ENCODE measurements at regions of chrX and their contacts with region 1.

Region 1: GRCh38 chrX:138745196-138745595 is 33.7 kb upstream of the FGF13 start:
- DNase-seq: peak; percentile 8
- ATAC-seq: peak; percentile 82
- H3K4me3 ChIP-seq: no peak overlapping the region
- H3K27ac ChIP-seq: no peak overlapping the region
- H3K4me1 ChIP-seq: no peaks in the 10 kb centered on the region
- H3K27me3 ChIP-seq: no peaks in the 10 kb centered on the region
- CTCF ChIP-seq: peak; percentile 66 to 71 (median 71); a peak in 5 of 6 replicates
- EP300 ChIP-seq: no peak
- POLR2A ChIP-seq: no peak
- RAD21 ChIP-seq: peak; percentile 75

Region 2: DNA sequence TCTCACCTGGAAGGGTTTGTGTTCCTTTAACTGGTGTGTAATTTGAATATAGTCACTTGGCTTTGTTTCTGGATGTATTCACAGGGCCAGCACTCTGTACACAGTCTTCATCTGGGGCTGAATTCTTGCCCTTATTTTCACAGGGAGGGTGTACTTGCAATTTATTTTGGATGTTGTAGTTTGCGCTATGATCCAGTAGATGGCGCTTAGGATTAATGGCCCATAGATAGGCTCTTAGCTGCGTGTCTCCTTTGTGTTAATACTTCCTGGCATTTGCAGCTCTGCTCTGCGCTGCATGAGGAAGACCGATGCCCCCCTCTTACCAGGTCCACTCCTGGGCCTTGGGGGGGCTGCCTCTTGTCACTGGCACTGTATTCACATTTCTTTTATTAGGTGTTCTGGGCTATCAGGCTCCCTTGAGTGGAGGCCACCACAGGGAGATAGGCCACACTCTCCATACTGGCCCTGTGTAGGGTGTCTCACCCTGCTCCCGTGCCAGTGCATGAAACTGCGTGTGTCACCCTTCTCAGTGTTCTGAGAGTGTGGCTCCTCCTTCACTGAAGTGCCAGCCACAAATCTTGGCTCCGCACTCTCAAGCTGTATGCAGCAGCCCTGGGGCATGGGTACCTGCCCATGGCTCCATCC is 617.0 kb before region 1 on chrX:
- CTCF ChIA-PET with region 1: interaction called, 4 read pairs
- POLR2A ChIA-PET with region 1: no interaction called
- RAD21 ChIA-PET with region 1: interaction called, 4 read pairs
- SMC1A ChIA-PET with region 1: no interaction called
- in situ Hi-C with region 1: loop called (anchors 10 kb)
- intact Hi-C with region 1: loop called (anchors 1 kb)
- DNase-seq: no peak
- ATAC-seq: peak; percentile 92
- H3K4me3 ChIP-seq: no peak overlapping the region
- H3K27ac ChIP-seq: no peak overlapping the region
- H3K4me1 ChIP-seq: no peaks in the 10 kb centered on the region
- H3K27me3 ChIP-seq: no peaks in the 10 kb centered on the region
- CTCF ChIP-seq: peak; percentile 61 to 72 (median 70); a peak in 5 of 6 replicates
- EP300 ChIP-seq: no peak
- POLR2A ChIP-seq: no peak
- RAD21 ChIP-seq: peak; percentile 60

Region 3: DNA sequence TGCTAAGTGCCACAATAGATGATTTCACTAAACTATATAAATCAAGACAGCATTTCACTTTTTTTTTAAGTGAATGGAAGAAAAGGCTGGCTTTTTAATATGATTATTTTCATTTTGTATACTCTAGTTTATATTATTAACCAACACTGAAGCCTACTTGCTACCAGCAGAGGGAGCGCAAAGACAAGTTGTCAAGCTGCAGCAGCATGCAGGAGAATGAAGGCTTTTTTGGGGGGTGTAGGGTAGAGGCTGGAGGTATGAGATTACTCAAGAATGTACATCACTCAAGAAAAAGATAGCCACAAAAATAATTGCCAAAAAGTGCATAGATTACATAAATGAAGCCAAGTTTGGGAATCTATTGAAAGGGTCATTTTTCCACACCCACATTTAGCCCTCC is 553.2 kb before region 1 on chrX:
- CTCF ChIA-PET with region 1: interaction called, 13 read pairs
- POLR2A ChIA-PET with region 1: no interaction called
- RAD21 ChIA-PET with region 1: interaction called, 3 read pairs
- SMC1A ChIA-PET with region 1: interaction called, 3 read pairs
- in situ Hi-C with region 1: loop called (anchors 10 kb)
- intact Hi-C with region 1: loop called (anchors 1 kb)
- DNase-seq: no peak
- ATAC-seq: peak; percentile 55; the same call in 2 of the 3 replicates
- H3K4me3 ChIP-seq: no peak overlapping the region
- H3K27ac ChIP-seq: no peak overlapping the region
- H3K4me1 ChIP-seq: no peaks in the 10 kb centered on the region
- H3K27me3 ChIP-seq: no peaks in the 10 kb centered on the region
- CTCF ChIP-seq: peak; percentile 39 to 47 (median 47); a peak in 5 of 6 replicates
- EP300 ChIP-seq: no peak
- POLR2A ChIP-seq: no peak
- RAD21 ChIP-seq: peak; percentile 69

Region 4: DNA sequence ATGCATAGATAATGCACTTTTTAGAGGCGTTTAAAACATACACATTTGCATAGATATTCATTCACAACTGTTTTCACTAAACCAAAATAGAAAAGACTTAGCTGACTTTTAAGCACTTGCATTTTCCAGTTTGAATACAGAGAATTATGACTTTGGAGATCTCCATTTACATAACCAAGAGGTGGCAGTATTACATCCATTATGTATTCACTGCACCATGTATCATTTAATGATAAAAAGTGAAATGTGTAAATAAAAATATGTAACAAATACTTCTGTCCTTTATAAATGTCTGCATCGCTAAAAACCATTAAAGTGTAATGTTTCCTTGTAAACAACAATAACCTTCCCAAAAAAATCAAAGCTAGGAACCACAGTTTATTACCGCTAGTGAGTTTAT is 446.9 kb before region 1 on chrX:
- CTCF ChIA-PET with region 1: interaction called, 3 read pairs
- POLR2A ChIA-PET with region 1: no interaction called
- RAD21 ChIA-PET with region 1: no interaction called
- SMC1A ChIA-PET with region 1: no interaction called
- in situ Hi-C with region 1: no loop called
- intact Hi-C with region 1: loop called (anchors 5 kb)
- DNase-seq: no peak
- ATAC-seq: no peak
- H3K4me3 ChIP-seq: no peak overlapping the region
- H3K27ac ChIP-seq: no peak overlapping the region
- H3K4me1 ChIP-seq: no peaks in the 10 kb centered on the region
- H3K27me3 ChIP-seq: no peaks in the 10 kb centered on the region
- CTCF ChIP-seq: no peak
- EP300 ChIP-seq: no peak
- POLR2A ChIP-seq: no peak
- RAD21 ChIP-seq: no peak